A549 (cell line): ENCODE measurements at regions of chr18 and their contacts with region 1.

Region 1: DNA sequence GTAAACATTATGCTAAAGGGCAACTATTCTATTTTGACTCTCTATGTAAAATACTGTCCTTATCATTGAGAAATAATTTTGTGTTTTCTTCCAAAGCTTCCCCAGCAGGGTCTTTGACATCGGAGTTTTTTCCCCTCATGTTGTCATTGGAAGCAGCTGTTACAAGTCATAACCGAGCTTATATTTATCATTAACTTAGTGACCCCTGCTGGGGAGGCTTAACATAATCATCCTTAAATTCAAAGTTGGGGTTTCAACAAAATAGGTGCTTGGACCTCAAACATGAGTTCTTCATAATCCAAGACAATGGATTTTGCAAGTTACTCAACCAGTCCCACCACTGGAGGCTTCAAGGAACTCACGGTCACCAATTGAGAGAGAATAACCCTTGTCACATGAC is 330.9 kb downstream of the DCC start:
- DNase-seq: peak; percentile 23 to 45
- ATAC-seq: peak in 1 of 2 experiments; percentile 51; a peak in 2 of 6 replicates
- H3K4me3 ChIP-seq: no peak overlapping the region
- H3K27ac ChIP-seq: no peak overlapping the region
- H3K4me1 ChIP-seq: no peaks in the 10 kb centered on the region
- CTCF ChIP-seq: 0 out of 3 replicates have a peak, but pooled peaks have one; percentile 37
- EP300 ChIP-seq: no peak
- POLR2A ChIP-seq: no peak
- RAD21 ChIP-seq: peak; percentile 69 to 73

Region 2: DNA sequence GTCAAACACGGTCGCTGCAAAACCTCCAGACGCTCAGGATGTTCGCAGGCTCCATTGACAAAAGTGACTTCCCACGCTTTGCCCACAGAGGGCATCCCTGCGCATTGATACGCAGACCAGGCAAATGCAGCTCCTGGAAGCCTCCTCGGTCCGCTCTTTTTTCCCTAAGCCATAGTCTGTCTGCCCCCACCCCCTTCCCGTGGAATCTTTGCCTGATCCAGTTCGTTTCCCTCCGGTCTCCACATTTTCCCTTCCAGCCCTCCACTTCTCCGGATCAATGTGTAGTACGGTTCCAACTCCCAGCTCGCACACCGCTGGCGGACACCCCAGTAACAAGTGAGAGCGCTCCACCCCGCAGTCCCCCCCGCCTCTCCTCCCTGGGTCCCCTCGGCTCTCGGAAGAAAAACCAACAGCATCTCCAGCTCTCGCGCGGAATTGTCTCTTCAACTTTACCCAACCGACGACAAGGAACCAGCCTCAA is 331.0 kb before region 1 on chr18 and contains the start of gene DCC:
- CTCF ChIA-PET with region 1: interaction called, 24 read pairs
- POLR2A ChIA-PET with region 1: no interaction called
- DNase-seq: peak; percentile 35 to 77
- ATAC-seq: peak; percentile 87 to 91
- H3K4me3 ChIP-seq: peak within 1 kb of the TSS; percentile 40
- H3K27ac ChIP-seq: no peak within 1 kb of the TSS
- H3K4me1 ChIP-seq: 0 out of 3 replicates have a peak, but pooled peaks cover 9% of the 10 kb centered on the region
- CTCF ChIP-seq: peak; percentile 44
- EP300 ChIP-seq: no peak
- POLR2A ChIP-seq: no peak
- RAD21 ChIP-seq: peak; percentile 64 to 66
- polyA plus RNA-seq, gene DCC: 0.11 and 0.12 TPM in 2 replicates

Region 3: GRCh38 chr18:52682260-52682659 is 11.4 kb after region 1 on chr18:
- CTCF ChIA-PET with region 1: no interaction called
- POLR2A ChIA-PET with region 1: no interaction called
- DNase-seq: no peak
- ATAC-seq: no peak
- H3K4me3 ChIP-seq: no peak overlapping the region
- H3K27ac ChIP-seq: no peak overlapping the region
- H3K4me1 ChIP-seq: no peaks in the 10 kb centered on the region
- CTCF ChIP-seq: no peak
- EP300 ChIP-seq: no peak
- POLR2A ChIP-seq: no peak
- RAD21 ChIP-seq: no peak